Activated CD4-positive, alpha-beta memory T cell treated with anti-CD3 and anti-CD28 coated beads, Interleukin-2, amount 10 ng/mL, durations not matched to agents 7 days and 5 days (primary cell): ENCODE measurements at regions of chr2 and their contacts with region 1.

Region 1: DNA sequence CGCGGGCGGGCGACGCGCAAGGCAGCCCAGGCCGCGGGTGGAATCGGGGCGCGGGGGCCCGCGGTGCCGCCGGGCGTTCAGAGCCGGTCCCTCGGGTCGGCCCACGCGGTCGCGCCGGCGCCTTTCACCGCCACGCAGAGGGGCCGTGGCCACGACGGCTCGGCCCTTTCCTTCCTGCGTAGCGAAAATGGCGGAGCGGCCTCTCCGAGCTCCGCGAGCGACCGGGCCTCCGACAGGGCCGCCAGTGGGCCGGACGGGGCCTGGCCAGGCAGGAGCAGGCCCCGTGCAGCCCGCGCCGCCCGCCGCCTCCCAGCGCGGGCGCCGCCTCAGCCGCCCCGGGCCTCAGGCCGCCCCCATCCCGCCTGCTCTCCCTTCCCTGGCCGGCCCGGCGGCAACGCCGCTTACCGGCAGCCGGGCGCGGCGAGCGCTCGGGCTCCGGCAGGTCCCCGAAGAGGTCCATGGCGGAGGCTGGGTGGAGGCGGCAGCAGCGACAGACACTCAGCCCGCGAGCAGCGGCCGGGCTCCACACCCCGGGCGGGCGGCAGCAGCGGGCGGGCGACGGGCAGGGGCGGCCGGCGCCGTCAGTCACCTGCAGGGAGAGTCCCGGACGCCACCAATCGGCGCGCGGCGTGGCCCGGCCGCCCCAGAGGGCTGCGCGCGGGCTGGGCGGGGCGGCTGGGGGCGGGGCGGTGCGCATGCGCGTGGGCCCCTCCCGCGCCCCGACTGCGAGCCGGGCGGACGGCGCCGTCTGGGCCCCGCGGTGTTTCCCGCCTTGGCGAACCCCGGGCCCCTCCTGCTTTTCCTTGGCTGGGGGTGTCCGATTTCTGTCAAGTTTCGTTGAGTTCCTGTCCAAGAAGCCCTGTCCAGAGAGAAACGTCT is at the start of gene ILKAP:
- DNase-seq: peak; percentile 90
- H3K4me3 Mint-ChIP-seq: peak within 1 kb of the TSS; percentile 82
- H3K27ac Mint-ChIP-seq: peak within 1 kb of the TSS; percentile 81
- H3K4me1 Mint-ChIP-seq: peaks cover 45% of the 10 kb centered on the region
- H3K27me3 Mint-ChIP-seq: peaks cover 2% of the 10 kb centered on the region
- total RNA-seq, gene ILKAP: 50.8 to 54.3 TPM

Region 2: DNA sequence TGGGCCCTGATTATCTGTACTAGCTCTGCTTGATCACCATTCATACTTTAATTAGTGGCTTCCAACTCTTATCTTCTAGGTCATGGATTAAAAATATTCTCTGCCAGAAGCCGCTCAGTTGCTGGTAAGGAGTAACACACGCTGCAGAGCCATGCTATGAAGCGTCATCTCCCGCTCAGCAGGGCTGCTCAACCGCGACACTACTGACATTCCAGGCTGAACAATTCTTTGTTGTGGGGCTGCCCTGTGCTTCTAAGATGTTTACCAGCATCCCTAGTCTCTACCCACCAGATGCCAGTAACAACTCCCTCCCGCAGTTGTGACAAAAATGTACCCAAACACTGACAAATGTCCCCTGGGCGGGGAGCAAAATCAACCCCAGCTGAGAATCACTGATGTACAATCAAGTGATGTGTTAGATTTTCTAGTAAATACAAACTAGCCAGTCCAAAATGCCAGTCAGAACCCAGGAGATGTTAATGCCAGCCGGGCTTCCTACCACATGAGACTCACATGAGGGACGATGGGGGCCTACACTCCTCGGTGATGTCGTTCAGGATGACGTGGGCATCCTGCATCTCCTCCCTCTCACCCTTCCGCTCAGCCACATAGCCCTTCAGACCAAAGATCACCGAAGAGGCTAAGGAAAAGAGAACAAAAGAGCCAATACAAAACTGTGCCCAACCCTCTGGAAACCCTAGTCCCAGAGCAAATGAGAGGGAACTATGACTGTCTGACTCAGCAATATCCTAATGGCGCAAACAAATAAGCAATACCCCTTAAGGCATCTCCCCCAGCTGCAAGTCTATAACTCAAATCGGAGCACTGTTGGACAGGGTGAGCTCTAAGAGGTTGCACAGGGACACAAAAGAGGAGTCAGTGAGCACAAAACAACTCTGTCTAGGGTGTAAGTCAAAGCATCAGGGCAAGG is 15.4 kb before region 1 on chr2:
- CTCF ChIA-PET with region 1: no interaction called
- POLR2A ChIA-PET with region 1: interaction called, 15 read pairs
- DNase-seq: no peak
- H3K4me3 Mint-ChIP-seq: no peak overlapping the region
- H3K27ac Mint-ChIP-seq: no peak overlapping the region
- H3K4me1 Mint-ChIP-seq: peaks cover 7% of the 10 kb centered on the region
- H3K27me3 Mint-ChIP-seq: no peaks in the 10 kb centered on the region